Endothelial cell of umbilical vein (primary cell): ENCODE measurements at regions of chr16 and their contacts with region 1.

Region 1: DNA sequence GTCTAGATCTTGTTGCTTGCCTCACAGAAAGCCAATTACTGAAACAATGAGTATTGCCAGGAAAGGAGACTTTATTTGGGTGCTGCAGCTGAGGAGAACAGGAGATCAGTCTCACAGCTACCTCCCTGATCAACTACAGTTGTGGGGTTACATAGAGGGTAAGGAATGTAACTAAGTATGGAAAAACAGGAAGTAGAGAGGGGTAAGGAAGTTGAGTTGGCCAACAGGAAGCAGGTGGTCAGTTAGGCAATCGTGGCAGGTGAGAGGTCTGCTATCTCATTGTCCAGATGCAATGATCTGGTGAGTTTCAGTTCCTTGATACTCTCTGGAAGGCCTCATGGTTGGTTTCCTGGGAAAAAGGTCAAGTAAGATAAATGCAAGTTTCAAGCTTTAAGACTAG is 333.1 kb upstream of the GOT2 start:
- DNase-seq: peak; percentile 98
- H3K4me3 ChIP-seq: no peak overlapping the region
- H3K27ac ChIP-seq: peak overlapping the region; percentile 91
- H3K4me1 ChIP-seq: peaks cover 24% of the 10 kb centered on the region
- H3K27me3 ChIP-seq: no peaks in the 10 kb centered on the region
- CTCF ChIP-seq: no peak
- POLR2A ChIP-seq: peak; percentile 90

Region 2: DNA sequence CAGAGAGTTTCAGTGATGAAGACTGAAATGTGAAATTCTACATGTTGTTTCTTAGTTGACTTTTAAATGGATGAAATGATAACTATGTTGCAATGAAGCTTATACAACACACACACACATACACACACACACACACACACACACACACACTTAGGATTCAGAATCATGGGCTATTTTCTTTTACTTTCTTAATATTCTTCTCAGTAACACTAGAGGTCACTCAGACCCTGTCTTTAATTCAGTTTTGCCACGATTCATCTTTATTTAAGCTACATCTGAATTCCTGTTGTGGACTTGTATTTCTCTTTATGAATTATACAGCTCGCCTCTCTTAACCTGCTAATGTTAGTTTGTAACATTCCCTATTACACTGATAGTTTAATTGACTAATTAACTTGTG is 223.5 kb before region 1 on chr16:
- CTCF ChIA-PET with region 1: interaction called, 7 read pairs
- POLR2A ChIA-PET with region 1: no interaction called
- dilution Hi-C with region 1: no loop called
- intact Hi-C with region 1: loop called (anchors 1 kb)
- DNase-seq: peak; percentile 67
- H3K4me3 ChIP-seq: no peak overlapping the region
- H3K27ac ChIP-seq: no peak overlapping the region
- H3K4me1 ChIP-seq: no peaks in the 10 kb centered on the region
- H3K27me3 ChIP-seq: no peaks in the 10 kb centered on the region
- CTCF ChIP-seq: peak; percentile 5 to 21
- POLR2A ChIP-seq: no peak

Region 3: DNA sequence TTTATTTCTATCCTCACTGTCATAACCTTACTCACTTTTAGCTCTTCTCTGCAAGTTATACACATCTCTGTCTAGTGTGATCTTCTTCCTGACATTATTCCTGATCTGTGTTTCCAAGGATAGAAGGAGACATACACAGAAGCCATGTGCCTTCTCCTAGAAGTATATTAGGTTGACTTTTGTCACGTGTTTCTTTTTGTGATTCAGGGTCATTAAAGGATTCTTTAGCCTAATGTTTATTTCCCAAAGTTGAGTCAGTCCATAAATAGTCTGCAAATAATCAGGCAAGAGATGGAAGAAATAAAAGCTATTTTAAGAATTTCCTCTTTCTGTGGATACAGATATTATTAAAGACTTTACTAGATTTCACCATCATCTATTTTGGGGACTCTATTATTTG is 119.0 kb before region 1 on chr16:
- CTCF ChIA-PET with region 1: no interaction called
- POLR2A ChIA-PET with region 1: no interaction called
- dilution Hi-C with region 1: no loop called
- intact Hi-C with region 1: no loop called
- DNase-seq: no peak
- H3K4me3 ChIP-seq: no peak overlapping the region
- H3K27ac ChIP-seq: no peak overlapping the region
- H3K4me1 ChIP-seq: no peaks in the 10 kb centered on the region
- H3K27me3 ChIP-seq: no peaks in the 10 kb centered on the region
- CTCF ChIP-seq: no peak
- POLR2A ChIP-seq: no peak

Region 4: GRCh38 chr16:59090541-59090940 is 23.3 kb after region 1 on chr16:
- CTCF ChIA-PET with region 1: no interaction called
- POLR2A ChIA-PET with region 1: no interaction called
- dilution Hi-C with region 1: no loop called
- intact Hi-C with region 1: no loop called
- DNase-seq: no peak
- H3K4me3 ChIP-seq: no peak overlapping the region
- H3K27ac ChIP-seq: no peak overlapping the region
- H3K4me1 ChIP-seq: no peaks in the 10 kb centered on the region
- H3K27me3 ChIP-seq: no peaks in the 10 kb centered on the region
- CTCF ChIP-seq: no peak
- POLR2A ChIP-seq: no peak

Region 5: DNA sequence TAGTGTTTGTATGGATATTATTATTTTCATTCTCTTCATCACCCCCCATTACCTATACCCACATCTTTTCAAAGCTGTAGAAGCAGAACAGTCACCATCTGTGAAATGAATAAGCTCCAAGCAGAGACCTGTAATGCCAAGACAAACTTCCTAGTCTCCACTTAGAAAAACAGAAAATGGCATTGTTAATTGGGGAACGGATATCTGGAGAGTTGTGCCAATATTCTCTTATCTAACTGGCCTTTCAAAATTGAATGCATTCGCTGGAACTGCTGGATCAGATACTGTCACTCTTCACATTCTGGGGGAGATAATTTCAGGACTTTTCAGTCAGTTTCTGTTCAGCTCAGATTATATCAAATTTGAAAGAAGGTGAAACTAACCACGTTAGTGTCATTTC is 131.3 kb after region 1 on chr16:
- CTCF ChIA-PET with region 1: interaction called, 3 read pairs
- POLR2A ChIA-PET with region 1: no interaction called
- dilution Hi-C with region 1: no loop called
- intact Hi-C with region 1: loop called (anchors 1 kb)
- DNase-seq: peak; percentile 95
- H3K4me3 ChIP-seq: no peak overlapping the region
- H3K27ac ChIP-seq: peak overlapping the region; percentile 51
- H3K4me1 ChIP-seq: peaks cover 25% of the 10 kb centered on the region
- H3K27me3 ChIP-seq: no peaks in the 10 kb centered on the region
- CTCF ChIP-seq: no peak
- POLR2A ChIP-seq: peak; percentile 72

Region 6: GRCh38 chr16:59478838-59479237 is 411.6 kb after region 1 on chr16:
- CTCF ChIA-PET with region 1: no interaction called
- POLR2A ChIA-PET with region 1: no interaction called
- dilution Hi-C with region 1: no loop called
- intact Hi-C with region 1: loop called (anchors 5 kb)
- DNase-seq: peak; percentile 88
- H3K4me3 ChIP-seq: no peak overlapping the region
- H3K27ac ChIP-seq: peak overlapping the region; percentile 45
- H3K4me1 ChIP-seq: peaks cover 11% of the 10 kb centered on the region
- H3K27me3 ChIP-seq: no peaks in the 10 kb centered on the region
- CTCF ChIP-seq: no peak
- POLR2A ChIP-seq: no peak

Region 7: GRCh38 chr16:60091529-60091928 is 1024.3 kb after region 1 on chr16:
- CTCF ChIA-PET with region 1: no interaction called
- POLR2A ChIA-PET with region 1: no interaction called
- dilution Hi-C with region 1: no loop called
- intact Hi-C with region 1: loop called (anchors 1 kb)
- DNase-seq: peak; percentile 88
- H3K4me3 ChIP-seq: peak overlapping the region in 1 of 3 experiments; percentile 28
- H3K27ac ChIP-seq: peak overlapping the region; percentile 90
- H3K4me1 ChIP-seq: peaks cover 24% of the 10 kb centered on the region
- H3K27me3 ChIP-seq: no peaks in the 10 kb centered on the region
- CTCF ChIP-seq: no peak
- POLR2A ChIP-seq: no peak